Breast epithelium (tissue), 4 donors: ENCODE measurements at regions of chr14 and their contacts with region 1.

Region 1: DNA sequence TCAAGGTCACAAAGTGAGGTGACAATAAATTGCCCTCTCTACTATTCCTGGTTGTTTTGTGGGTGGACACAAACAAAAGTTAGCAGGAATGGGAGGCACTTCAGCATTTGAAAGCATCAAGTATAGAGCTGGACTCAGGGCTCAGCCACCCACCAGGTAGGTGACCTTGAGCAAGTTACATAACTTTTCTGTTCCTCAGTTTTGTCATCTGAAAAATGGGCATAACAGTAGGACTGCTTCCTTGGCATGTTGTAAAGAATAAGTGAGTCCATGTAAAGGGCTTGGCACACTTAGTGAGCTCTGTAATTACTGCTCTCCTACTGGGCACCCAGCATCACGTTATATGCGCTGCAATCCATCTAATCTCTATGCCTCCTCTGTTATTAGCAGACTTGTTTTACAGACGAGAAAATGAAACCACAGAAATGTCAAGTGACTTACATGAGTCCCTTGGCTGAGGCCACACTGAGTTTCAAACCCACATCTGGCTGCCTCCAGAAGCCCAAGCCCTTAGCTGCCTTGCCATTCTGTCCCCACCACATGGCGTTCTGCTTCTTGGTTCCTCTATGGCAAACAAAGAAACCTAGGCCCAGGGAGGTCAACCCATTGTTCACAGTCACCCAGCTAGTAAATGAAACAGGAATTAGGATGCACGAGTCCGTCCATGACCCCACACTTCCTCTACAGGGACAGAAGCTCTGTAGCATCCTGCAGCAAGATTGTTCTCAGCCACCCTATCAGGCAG is 63.2 kb upstream of the SLC24A4 start:
- DNase-seq: no peak
- H3K4me3 ChIP-seq: no peak overlapping the region
- H3K27ac ChIP-seq: no peak overlapping the region
- H3K4me1 ChIP-seq: no peaks in the 10 kb centered on the region
- H3K27me3 ChIP-seq: no peaks in the 10 kb centered on the region
- CTCF ChIP-seq: no peak
- POLR2A ChIP-seq: no peak

Region 2: GRCh38 chr14:91780452-91780851 is 479.3 kb before region 1 on chr14:
- intact Hi-C with region 1: loop called (anchors 5 kb)
- DNase-seq: no peak
- H3K4me3 ChIP-seq: no peak overlapping the region
- H3K27ac ChIP-seq: no peak overlapping the region
- H3K4me1 ChIP-seq: no peaks in the 10 kb centered on the region
- H3K27me3 ChIP-seq: no peaks in the 10 kb centered on the region
- CTCF ChIP-seq: no peak
- POLR2A ChIP-seq: no peak

Region 3: DNA sequence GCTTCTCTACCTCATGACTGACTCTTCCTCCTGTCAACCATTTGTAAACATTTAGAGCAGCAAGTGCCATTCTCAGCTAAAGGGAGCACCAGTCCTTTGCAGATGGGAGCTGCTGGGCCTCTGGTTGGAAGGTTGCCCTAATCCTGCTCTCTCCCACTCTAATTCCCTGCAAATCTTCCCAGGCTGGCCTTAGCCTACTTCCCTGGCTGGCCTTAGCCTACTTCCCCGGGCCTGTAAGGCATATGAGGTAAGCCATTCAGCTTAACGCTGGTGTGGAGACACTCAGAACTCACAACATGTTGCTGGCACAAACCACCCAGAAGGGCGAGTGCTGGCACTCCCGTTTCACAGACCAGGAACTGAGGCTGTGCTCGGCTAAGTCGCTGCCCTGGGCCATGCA is 69.0 kb before region 1 on chr14:
- intact Hi-C with region 1: no loop called
- DNase-seq: no peak
- H3K4me3 ChIP-seq: no peak overlapping the region
- H3K27ac ChIP-seq: no peak overlapping the region
- H3K4me1 ChIP-seq: no peaks in the 10 kb centered on the region
- H3K27me3 ChIP-seq: no peaks in the 10 kb centered on the region
- CTCF ChIP-seq: no peak
- POLR2A ChIP-seq: no peak